SK-N-SH (cell line): ENCODE measurements at regions of chr2 and their contacts with region 1.

Region 1: DNA sequence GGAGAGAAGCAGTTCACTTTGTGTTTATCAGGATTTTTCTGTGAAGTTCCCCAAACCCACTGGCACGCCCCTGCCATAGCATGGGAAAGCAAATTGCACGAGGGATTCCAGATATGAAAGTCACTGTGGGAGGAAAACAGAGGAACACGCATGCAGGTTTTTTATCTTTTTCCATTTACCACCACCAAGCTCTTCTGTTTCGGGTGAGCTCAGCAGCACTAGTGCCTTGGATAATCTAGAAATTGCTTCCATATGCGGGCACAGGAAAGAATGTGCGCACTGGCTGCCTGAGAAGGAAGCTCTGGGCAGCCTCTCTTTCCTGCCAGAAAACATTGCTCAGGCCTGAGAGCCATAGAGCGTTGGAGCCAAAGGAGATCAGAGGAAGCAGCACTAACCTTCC is 65.9 kb upstream of the WIPF1 start:
- DNase-seq: peak; percentile 68
- H3K4me3 ChIP-seq: no peak overlapping the region
- H3K27ac ChIP-seq: peak overlapping the region; percentile 91 to 99
- H3K4me1 ChIP-seq: peaks cover 34 to 69% of the 10 kb centered on the region in 2 experiments
- H3K27me3 ChIP-seq: no peaks in the 10 kb centered on the region
- CTCF ChIP-seq: no peak
- EP300 ChIP-seq: peak; percentile 35 to 68; a peak in 2 of 4 replicates
- RAD21 ChIP-seq: no peak; the same call in 1 of the 2 replicates

Region 2: GRCh38 chr2:174644401-174644800 is 19.1 kb before region 1 on chr2:
- CTCF ChIA-PET with region 1: no interaction called
- POLR2A ChIA-PET with region 1: no interaction called
- DNase-seq: no peak
- H3K4me3 ChIP-seq: no peak overlapping the region
- H3K27ac ChIP-seq: no peak overlapping the region
- H3K4me1 ChIP-seq: no peaks in the 10 kb centered on the region; a peak in 1 of 4 replicates
- H3K27me3 ChIP-seq: no peaks in the 10 kb centered on the region
- CTCF ChIP-seq: no peak
- EP300 ChIP-seq: no peak
- RAD21 ChIP-seq: no peak

Region 3: DNA sequence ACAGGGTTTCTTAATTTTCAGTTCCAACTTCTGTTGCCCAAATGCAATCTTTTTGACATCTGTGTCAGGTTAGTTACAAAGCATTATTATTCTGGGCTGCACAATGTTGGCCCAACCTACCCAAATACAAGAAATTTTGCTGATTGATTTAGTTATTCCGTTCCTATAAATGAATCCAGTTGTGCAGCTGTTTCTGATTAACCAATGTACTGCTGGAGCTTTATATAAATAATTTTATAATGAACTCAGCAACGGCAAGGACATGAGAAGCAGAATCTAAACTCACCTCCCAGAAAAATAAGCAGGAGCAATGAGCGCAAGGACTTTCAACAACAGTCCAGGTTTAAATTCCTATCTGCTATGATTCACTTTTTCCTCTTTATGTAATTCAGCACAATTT is 10.3 kb after region 1 on chr2:
- CTCF ChIA-PET with region 1: interaction called, 4 read pairs
- POLR2A ChIA-PET with region 1: interaction called, 10 read pairs
- DNase-seq: no peak
- H3K4me3 ChIP-seq: no peak overlapping the region
- H3K27ac ChIP-seq: peak overlapping the region; percentile 63 to 89
- H3K4me1 ChIP-seq: peaks cover 0 to 41% of the 10 kb centered on the region in 2 experiments; a peak in 2 of 4 replicates
- H3K27me3 ChIP-seq: no peaks in the 10 kb centered on the region
- CTCF ChIP-seq: no peak
- EP300 ChIP-seq: peak in 1 of 2 experiments; percentile 68; a peak in 2 of 4 replicates
- RAD21 ChIP-seq: no peak

Region 4: DNA sequence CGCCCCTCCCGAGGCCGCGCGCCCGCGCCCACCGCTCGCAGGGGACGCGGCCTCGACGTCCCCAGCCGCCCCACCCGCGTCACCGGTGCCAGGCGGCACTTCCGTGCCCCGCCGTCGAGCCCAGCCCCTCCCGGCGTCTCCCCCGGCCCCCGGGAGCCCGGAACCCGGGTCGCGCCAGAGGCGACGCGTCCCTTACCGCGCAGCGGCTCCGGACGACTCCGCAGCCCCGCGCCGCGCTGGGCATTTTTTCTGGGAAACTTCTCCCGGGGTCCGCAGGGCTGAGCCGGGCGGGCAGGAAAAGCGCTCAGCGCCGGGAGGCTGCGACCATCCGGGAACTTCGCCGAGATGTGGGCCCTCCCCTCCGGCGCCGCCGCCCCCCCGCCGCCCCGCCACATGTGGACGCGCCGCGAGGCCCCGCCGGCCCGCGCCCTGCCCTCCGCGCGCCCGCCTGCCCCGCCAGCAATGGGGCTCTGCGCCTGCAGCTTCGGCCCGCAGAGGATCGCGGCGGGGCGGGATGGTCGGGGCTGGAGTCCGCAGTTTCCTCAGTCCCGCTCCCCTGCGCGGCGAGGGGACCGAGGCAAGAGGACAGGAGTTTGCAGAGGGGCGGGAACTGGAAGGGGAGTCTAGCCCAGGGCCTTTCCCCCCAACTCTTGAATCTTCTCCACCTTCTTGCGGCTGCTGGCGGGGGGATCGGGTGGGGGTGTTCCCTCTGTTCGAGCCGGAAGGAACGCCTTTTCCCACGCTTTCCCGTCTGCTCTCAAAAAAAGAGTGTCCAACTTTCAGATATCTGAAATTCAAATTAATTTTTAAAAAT is 19.2 kb after region 1 on chr2:
- CTCF ChIA-PET with region 1: interaction called, 14 read pairs
- POLR2A ChIA-PET with region 1: interaction called, 13 read pairs
- DNase-seq: peak; percentile 95
- H3K4me3 ChIP-seq: peak overlapping the region; percentile 89 to 93
- H3K27ac ChIP-seq: peak overlapping the region; percentile 72 to 89
- H3K4me1 ChIP-seq: peaks cover 6 to 47% of the 10 kb centered on the region in 2 experiments; a peak in 2 of 4 replicates
- H3K27me3 ChIP-seq: no peaks in the 10 kb centered on the region
- CTCF ChIP-seq: 0 out of 2 replicates have a peak, but pooled peaks have one; percentile 6
- EP300 ChIP-seq: 0 out of 4 replicates have a peak, but pooled peaks of 1 of the 2 experiments have one; percentile 11
- RAD21 ChIP-seq: no peak